Activated B cell treated with CpG ODN at 0.5 μM for 24 hours (primary cell): ENCODE measurements at regions of chr11 and their contacts with region 1.

Region 1: GRCh38 chr11:47426061-47426956 is at the start of gene PSMC3:
- DNase-seq: peak; percentile 96
- ATAC-seq: peak; percentile 98
- H3K4me3 Mint-ChIP-seq: peak within 1 kb of the TSS; percentile 99
- H3K27ac Mint-ChIP-seq: peak within 1 kb of the TSS; percentile 99
- H3K4me1 Mint-ChIP-seq: peaks cover 20% of the 10 kb centered on the region
- H3K27me3 Mint-ChIP-seq: no peaks in the 10 kb centered on the region
- CTCF ChIP-seq: no peak
- total RNA-seq, gene PSMC3: 101 and 126 TPM in 2 replicates

Region 2: GRCh38 chr11:46616998-46617675 is 809.2 kb before region 1 on chr11 and contains the starts of genes ATG13 and HARBI1:
- CTCF ChIA-PET with region 1: no interaction called
- POLR2A ChIA-PET with region 1: no interaction called
- intact Hi-C with region 1: loop called (anchors 1 kb)
- DNase-seq: peak; percentile 91
- ATAC-seq: peak; percentile 94
- H3K4me3 Mint-ChIP-seq: peak within 1 kb of the TSS; percentile 93
- H3K27ac Mint-ChIP-seq: peak within 1 kb of the TSS; percentile 100
- H3K4me1 Mint-ChIP-seq: peaks cover 30% of the 10 kb centered on the region
- H3K27me3 Mint-ChIP-seq: no peaks in the 10 kb centered on the region
- CTCF ChIP-seq: no peak
- total RNA-seq, gene ATG13: 49.1 and 73.7 TPM in 2 replicates
- total RNA-seq, gene HARBI1: 5.4 and 6.5 TPM in 2 replicates

Region 3: GRCh38 chr11:46936138-46937110 is 489.9 kb before region 1 on chr11 and contains the start of gene CSTPP1:
- CTCF ChIA-PET with region 1: no interaction called
- POLR2A ChIA-PET with region 1: no interaction called
- intact Hi-C with region 1: loop called (anchors 1 kb)
- DNase-seq: peak; percentile 88
- ATAC-seq: peak; percentile 97
- H3K4me3 Mint-ChIP-seq: peak within 1 kb of the TSS; percentile 99
- H3K27ac Mint-ChIP-seq: peak within 1 kb of the TSS; percentile 93
- H3K4me1 Mint-ChIP-seq: peaks cover 17% of the 10 kb centered on the region
- H3K27me3 Mint-ChIP-seq: peaks cover 10% of the 10 kb centered on the region
- CTCF ChIP-seq: no peak
- total RNA-seq, gene CSTPP1: 26.2 and 29.9 TPM in 2 replicates

Region 4: DNA sequence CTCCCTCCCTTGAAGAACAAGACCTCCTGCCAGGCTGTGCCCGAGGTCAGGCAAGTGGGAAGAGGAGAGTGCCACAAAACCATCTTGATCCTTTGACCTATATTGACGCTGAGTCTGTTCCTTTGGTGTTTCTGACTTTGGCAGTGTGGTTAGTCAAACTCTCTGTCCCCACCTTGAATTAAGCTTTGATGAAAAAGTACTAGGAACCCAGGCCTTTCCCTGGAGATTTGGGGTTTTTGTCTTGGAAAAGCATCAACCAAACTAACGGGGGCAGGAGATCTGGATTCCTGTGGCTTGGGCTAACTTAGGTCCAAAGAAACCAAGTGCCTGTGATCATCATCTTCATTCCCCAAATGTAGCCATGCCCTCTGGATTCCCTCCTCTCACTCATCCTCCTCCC is 290.0 kb before region 1 on chr11:
- CTCF ChIA-PET with region 1: no interaction called
- POLR2A ChIA-PET with region 1: no interaction called
- intact Hi-C with region 1: no loop called
- DNase-seq: no peak
- ATAC-seq: no peak
- H3K4me3 Mint-ChIP-seq: no peak overlapping the region
- H3K27ac Mint-ChIP-seq: no peak overlapping the region
- H3K4me1 Mint-ChIP-seq: no peaks in the 10 kb centered on the region
- H3K27me3 Mint-ChIP-seq: no peaks in the 10 kb centered on the region
- CTCF ChIP-seq: no peak

Region 5: DNA sequence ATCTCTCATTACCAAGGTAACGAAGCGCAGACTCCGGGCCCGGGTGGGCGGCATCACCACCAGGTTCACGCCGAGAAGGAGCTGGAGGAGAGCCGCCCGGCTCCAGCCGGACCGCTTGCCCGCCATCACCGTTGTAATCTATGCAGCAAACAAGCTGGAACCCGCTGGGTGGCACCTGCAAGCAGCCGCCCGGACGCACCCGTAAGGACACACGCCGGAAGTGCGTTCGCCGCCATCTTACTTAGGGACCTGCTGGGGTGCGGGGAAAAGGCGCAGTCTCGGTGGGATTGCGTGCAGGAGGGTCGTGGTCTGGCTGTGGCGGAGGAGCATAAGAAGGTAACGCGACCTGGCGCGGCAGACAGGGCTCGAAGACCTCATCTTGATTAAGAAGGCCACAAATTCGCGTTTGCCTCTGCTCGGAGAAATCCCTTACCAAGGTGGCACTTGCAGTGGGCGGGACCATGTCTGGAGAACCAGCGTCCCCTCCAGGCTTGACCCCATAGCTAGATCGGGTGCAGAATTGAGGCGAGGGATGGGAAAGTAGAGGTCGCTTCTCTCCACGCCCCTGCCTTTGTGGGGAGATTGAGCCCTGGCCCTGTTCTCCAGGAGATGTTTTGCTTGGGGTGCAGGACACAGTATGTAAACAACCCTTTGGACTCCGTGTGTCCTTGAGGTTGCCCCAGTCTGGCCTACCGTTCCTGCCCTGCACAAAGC is 177.5 kb before region 1 on chr11 and contains the start of gene ACP2:
- CTCF ChIA-PET with region 1: no interaction called
- POLR2A ChIA-PET with region 1: interaction called, 6 read pairs
- intact Hi-C with region 1: loop called (anchors 1 kb)
- DNase-seq: peak; percentile 82
- ATAC-seq: peak; percentile 96
- H3K4me3 Mint-ChIP-seq: peak within 1 kb of the TSS; percentile 98
- H3K27ac Mint-ChIP-seq: peak within 1 kb of the TSS; percentile 98
- H3K4me1 Mint-ChIP-seq: peaks cover 21% of the 10 kb centered on the region
- H3K27me3 Mint-ChIP-seq: no peaks in the 10 kb centered on the region
- CTCF ChIP-seq: no peak
- total RNA-seq, gene ACP2: 18.7 and 22.5 TPM in 2 replicates

Region 6: GRCh38 chr11:47373876-47374720 is 52.2 kb before region 1 on chr11:
- CTCF ChIA-PET with region 1: interaction called, 8 read pairs
- POLR2A ChIA-PET with region 1: interaction called, 11 read pairs
- intact Hi-C with region 1: loop called (anchors 1 kb)
- DNase-seq: peak; percentile 81
- ATAC-seq: no peak
- H3K4me3 Mint-ChIP-seq: no peak overlapping the region
- H3K27ac Mint-ChIP-seq: peak overlapping the region; percentile 70
- H3K4me1 Mint-ChIP-seq: peaks cover 54% of the 10 kb centered on the region
- H3K27me3 Mint-ChIP-seq: no peaks in the 10 kb centered on the region
- CTCF ChIP-seq: peak; percentile 83

Region 7: GRCh38 chr11:47407746-47408590 is 18.3 kb before region 1 on chr11 and contains the start of gene SLC39A13:
- CTCF ChIA-PET with region 1: interaction called, 6 read pairs
- POLR2A ChIA-PET with region 1: interaction called, 19 read pairs
- intact Hi-C with region 1: loop called (anchors 1 kb)
- DNase-seq: peak; percentile 98
- ATAC-seq: peak; percentile 85
- H3K4me3 Mint-ChIP-seq: peak within 1 kb of the TSS; percentile 90
- H3K27ac Mint-ChIP-seq: peak within 1 kb of the TSS; percentile 95
- H3K4me1 Mint-ChIP-seq: peaks cover 24% of the 10 kb centered on the region
- H3K27me3 Mint-ChIP-seq: no peaks in the 10 kb centered on the region
- CTCF ChIP-seq: no peak
- total RNA-seq, gene SLC39A13: 27.5 and 28.2 TPM in 2 replicates

Region 8: GRCh38 chr11:47477323-47477722 is 51.0 kb after region 1 on chr11:
- CTCF ChIA-PET with region 1: no interaction called
- POLR2A ChIA-PET with region 1: no interaction called
- intact Hi-C with region 1: no loop called
- DNase-seq: no peak
- ATAC-seq: no peak
- H3K4me3 Mint-ChIP-seq: no peak overlapping the region
- H3K27ac Mint-ChIP-seq: no peak overlapping the region
- H3K4me1 Mint-ChIP-seq: no peaks in the 10 kb centered on the region
- H3K27me3 Mint-ChIP-seq: no peaks in the 10 kb centered on the region
- CTCF ChIP-seq: no peak

Region 9: DNA sequence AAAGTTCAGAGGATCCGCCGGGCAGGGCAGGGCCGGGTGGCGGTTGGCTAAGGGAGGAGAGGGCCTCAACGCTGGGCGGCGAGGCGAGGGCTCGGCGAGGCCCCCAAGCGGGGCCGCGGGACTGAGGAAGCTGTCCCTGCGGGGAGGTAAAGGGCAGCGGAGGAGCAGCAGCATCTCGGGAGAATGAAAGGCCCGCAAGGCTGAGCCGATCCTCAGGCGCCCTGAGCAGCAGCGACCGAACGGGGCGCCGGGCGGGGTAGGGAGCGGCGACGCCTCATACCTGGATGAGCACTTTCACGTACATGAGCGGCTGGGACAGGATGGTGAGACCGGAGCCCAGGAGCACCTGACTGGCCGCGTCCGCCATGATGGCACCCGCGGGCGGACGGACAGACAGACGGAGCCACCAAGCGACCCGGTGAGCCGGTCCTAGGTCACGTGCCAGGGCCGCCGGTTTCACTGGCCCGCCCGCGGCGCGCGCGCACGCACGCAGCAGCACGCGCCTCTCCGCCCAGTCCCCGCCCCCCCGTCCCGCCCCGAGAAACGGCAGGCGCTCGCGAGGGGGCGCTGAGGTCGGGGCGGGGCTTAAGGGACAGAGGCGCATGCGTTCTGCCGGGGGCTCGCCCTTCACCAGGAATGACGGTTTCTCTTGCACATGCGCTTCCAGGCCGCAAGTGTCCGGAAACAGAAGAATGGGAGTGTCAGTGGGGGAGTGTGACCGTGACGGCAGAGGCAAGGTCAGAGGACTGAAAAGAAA is 216.0 kb after region 1 on chr11 and contains the start of gene MTCH2:
- CTCF ChIA-PET with region 1: no interaction called
- POLR2A ChIA-PET with region 1: no interaction called
- intact Hi-C with region 1: loop called (anchors 1 kb)
- DNase-seq: peak; percentile 95
- ATAC-seq: peak; percentile 94
- H3K4me3 Mint-ChIP-seq: peak within 1 kb of the TSS; percentile 94
- H3K27ac Mint-ChIP-seq: peak within 1 kb of the TSS; percentile 95
- H3K4me1 Mint-ChIP-seq: peaks cover 25% of the 10 kb centered on the region
- H3K27me3 Mint-ChIP-seq: no peaks in the 10 kb centered on the region
- CTCF ChIP-seq: no peak
- total RNA-seq, gene MTCH2: 73.3 and 81.7 TPM in 2 replicates